Calu3 (cell line): ENCODE measurements at regions of chr16 and their contacts with region 1.

Region 1: GRCh38 chr16:75234856-75235696 is 16.3 kb downstream of the CTRB1 start:
- DNase-seq: no peak
- H3K4me3 Mint-ChIP-seq: no peak overlapping the region
- H3K27ac Mint-ChIP-seq: peak overlapping the region; percentile 1
- H3K4me1 Mint-ChIP-seq: peaks cover 29% of the 10 kb centered on the region
- H3K27me3 Mint-ChIP-seq: no peaks in the 10 kb centered on the region
- CTCF ChIP-seq: no peak

Region 2: GRCh38 chr16:75251280-75252048 is 16.4 kb after region 1 on chr16 and contains the start of gene BCAR1:
- CTCF ChIA-PET with region 1: interaction called, 16 read pairs
- intact Hi-C with region 1: no loop called
- DNase-seq: peak; percentile 93
- H3K4me3 Mint-ChIP-seq: peak within 1 kb of the TSS; percentile 96
- H3K27ac Mint-ChIP-seq: peak within 1 kb of the TSS; percentile 93
- H3K4me1 Mint-ChIP-seq: peaks cover 58% of the 10 kb centered on the region
- H3K27me3 Mint-ChIP-seq: no peaks in the 10 kb centered on the region
- CTCF ChIP-seq: peak; percentile 49
- total RNA-seq, gene BCAR1: 153 and 168 TPM in 2 replicates

Region 3: DNA sequence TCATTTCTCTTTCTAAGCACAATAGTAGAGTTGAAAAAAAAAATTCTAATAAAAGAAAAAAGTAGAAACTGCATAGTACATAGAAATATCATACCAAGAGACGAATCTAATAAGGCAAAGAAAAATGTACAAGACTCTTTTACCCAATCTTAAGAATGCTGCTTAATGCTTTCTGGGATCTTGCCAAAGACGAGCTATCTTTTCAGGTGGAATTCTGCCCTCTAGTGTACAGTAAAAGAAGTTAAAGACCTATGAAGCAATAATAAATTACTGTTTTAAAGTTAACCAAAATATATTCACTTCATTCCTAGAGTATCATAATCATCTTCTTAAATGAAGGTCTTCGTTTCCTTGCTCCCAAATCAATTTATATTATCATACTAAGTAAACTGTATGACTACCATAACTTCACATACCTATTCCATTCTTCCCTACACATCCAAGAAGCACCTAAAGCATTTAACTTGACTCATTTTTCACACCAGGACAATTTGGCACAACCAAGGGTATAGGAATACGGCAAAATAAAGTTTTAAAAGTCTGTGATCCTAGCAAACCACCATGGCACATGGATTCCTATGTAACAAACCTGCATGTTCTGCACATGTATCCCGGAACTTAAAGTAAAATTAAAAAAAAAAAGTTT is 150.6 kb after region 1 on chr16:
- CTCF ChIA-PET with region 1: interaction called, 26 read pairs
- intact Hi-C with region 1: loop called (anchors 1 kb)
- DNase-seq: no peak
- H3K4me3 Mint-ChIP-seq: no peak overlapping the region
- H3K27ac Mint-ChIP-seq: no peak overlapping the region
- H3K4me1 Mint-ChIP-seq: peaks cover 9% of the 10 kb centered on the region
- H3K27me3 Mint-ChIP-seq: no peaks in the 10 kb centered on the region
- CTCF ChIP-seq: peak; percentile 67